Sigmoid colon (tissue), 7 donors: ENCODE measurements at regions of chr2 and their contacts with region 1.

Region 1: GRCh38 chr2:109318150-109318948 is 189.3 kb downstream of the SH3RF3 start:
- DNase-seq: peak; percentile 95
- H3K4me3 ChIP-seq: peak overlapping the region in 2 of 4 donors; percentile 3 to 21
- H3K27ac ChIP-seq: peak overlapping the region; percentile 76 to 82 (median 82)
- H3K4me1 ChIP-seq: peaks cover 0 to 58% (median 52%) of the 10 kb centered on the region in 4 donors
- H3K27me3 ChIP-seq: no peaks in the 10 kb centered on the region
- CTCF ChIP-seq: no peak
- EP300 ChIP-seq: peak in 1 of 4 donors; percentile 14
- POLR2A ChIP-seq: no peak

Region 2: DNA sequence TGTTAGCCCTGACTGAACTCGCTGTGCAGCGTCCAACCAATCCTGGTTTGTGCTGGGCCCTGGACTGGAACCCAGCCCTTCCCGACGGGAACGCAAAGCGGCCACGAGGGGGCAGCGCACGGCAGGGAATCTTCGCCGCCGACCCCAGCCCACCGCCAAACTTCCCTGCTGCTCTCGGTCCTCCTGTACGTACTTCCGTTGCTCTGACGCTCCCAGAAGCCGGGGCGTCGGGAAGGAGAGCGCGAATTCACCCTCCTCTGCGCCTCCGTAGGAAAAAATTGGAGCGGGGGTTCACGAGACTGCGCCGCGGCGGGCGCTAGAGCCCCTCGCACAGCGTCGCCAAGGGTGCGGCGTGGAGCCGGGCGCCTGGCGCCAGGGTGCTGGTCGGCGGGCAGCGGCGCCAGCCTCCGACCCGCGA is 190.3 kb before region 1 on chr2:
- intact Hi-C with region 1: loop called (anchors 2 kb)
- DNase-seq: peak; percentile 92
- H3K4me3 ChIP-seq: peak overlapping the region; percentile 42 to 86 (median 74)
- H3K27ac ChIP-seq: peak overlapping the region; percentile 74 to 87 (median 84)
- H3K4me1 ChIP-seq: peaks cover 0 to 28% (median 21%) of the 10 kb centered on the region in 4 donors
- H3K27me3 ChIP-seq: no peaks in the 10 kb centered on the region
- CTCF ChIP-seq: peak; percentile 87 to 91 (median 88)
- EP300 ChIP-seq: no peak
- POLR2A ChIP-seq: peak in 1 of 2 donors; percentile 15